GM12878 (cell line): ENCODE measurements at regions of chr6 and their contacts with region 1.

Region 1: DNA sequence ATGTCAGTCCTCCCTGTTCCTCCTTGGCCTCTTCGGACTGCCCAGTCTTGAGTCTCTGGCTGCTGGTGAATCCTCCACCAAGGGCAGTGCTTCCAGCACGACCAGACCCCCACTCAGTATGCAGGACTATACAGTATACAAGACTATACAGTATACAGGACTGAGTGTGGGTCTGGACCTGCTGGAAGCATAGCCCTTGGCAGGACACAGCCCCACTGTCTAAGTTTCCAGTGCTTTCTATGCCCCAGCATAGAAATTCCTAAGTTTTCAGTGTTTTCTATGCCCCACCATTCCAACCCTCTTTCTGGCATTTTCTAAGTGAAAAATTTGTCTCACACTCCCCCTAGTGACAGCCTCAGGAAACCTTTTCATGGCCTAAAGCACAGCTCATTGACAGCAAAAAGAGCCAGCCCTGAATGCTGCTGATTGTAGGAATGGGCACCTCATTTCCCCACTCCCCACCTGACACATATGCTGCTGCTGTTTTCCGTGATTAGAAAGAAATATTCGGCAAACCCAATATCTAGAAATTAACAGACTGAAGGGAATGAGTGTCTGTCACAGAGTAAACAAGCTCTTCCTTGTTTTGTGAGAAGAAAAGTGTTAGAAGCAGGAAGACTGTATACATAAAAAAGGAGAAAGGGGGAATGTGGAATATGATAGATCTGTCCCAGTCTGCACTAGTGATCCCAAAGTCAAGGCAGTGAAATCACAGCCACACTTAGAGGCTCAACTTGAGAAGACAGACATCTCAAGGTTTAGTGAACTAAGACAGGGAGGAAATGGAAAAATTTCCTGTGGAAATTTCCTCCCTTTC is 206.9 kb downstream of the IBTK start:
- DNase-seq: peak; percentile 7
- ATAC-seq: peak; percentile 87
- H3K4me3 ChIP-seq: no peak overlapping the region
- H3K27ac ChIP-seq: no peak overlapping the region
- H3K4me1 ChIP-seq: no peaks in the 10 kb centered on the region
- H3K27me3 ChIP-seq: no peaks in the 10 kb centered on the region
- CTCF ChIP-seq: peak; percentile 73 to 85 (median 80)
- EP300 ChIP-seq: no peak
- POLR2A ChIP-seq: no peak
- RAD21 ChIP-seq: peak; percentile 74

Region 2: DNA sequence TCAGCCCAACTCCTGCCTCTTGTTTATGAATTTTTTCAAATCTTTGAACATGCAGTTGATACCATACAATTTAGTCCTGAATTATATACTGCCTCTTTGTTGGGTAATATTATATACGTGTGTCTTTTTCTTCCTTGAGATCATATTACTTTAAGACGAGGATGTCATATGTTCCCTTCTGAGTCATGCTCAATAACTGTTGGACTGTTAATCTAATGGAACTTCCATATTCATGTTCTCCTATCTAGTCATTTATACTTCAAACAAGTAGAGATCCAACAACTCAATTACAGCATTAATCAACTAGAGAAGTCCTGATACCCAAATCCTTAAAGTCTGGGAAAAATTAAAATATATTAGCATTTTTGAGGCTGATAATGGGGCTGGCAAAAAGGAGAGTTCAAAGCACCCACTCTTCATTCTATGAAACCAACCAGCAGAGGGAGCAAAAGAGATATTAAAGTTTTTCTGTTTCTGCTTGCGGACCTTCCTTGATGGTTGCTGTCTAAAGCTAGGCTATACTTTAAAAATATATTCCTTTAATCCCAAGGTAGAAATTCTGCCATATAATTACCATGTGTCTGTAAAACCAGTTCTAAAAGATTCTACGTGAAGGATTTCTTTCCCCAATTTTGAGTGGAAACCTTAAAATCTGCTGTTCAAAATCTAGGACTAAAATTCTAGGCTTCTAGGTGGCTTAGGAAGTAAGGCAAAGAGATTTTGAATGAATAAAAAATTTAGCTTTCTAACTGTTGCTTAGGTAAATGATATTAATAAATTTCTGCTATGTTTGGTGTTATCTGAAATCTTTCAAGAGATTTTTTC is 1435.2 kb before region 1 on chr6:
- CTCF ChIA-PET with region 1: interaction called, 14 read pairs
- POLR2A ChIA-PET with region 1: no interaction called
- RAD21 ChIA-PET with region 1: interaction called, 3 read pairs
- SMC1A ChIA-PET with region 1: interaction called, 4 read pairs
- in situ Hi-C with region 1: no loop called
- intact Hi-C with region 1: no loop called
- DNase-seq: no peak
- ATAC-seq: peak; percentile 74
- H3K4me3 ChIP-seq: no peak overlapping the region
- H3K27ac ChIP-seq: no peak overlapping the region
- H3K4me1 ChIP-seq: no peaks in the 10 kb centered on the region
- H3K27me3 ChIP-seq: no peaks in the 10 kb centered on the region
- CTCF ChIP-seq: peak; percentile 30 to 52 (median 43); a peak in 4 of 6 replicates
- EP300 ChIP-seq: no peak
- POLR2A ChIP-seq: no peak
- RAD21 ChIP-seq: peak; percentile 51

Region 3: GRCh38 chr6:81241126-81242041 is 799.2 kb before region 1 on chr6:
- CTCF ChIA-PET with region 1: interaction called, 5 read pairs
- POLR2A ChIA-PET with region 1: no interaction called
- RAD21 ChIA-PET with region 1: interaction called, 10 read pairs
- SMC1A ChIA-PET with region 1: interaction called, 3 read pairs
- in situ Hi-C with region 1: no loop called
- intact Hi-C with region 1: no loop called
- DNase-seq: no peak
- ATAC-seq: no peak
- H3K4me3 ChIP-seq: no peak overlapping the region
- H3K27ac ChIP-seq: no peak overlapping the region
- H3K4me1 ChIP-seq: no peaks in the 10 kb centered on the region
- H3K27me3 ChIP-seq: no peaks in the 10 kb centered on the region
- CTCF ChIP-seq: peak in 2 of 3 experiments; percentile 5 to 30; a peak in 1 of 6 replicates
- EP300 ChIP-seq: no peak
- POLR2A ChIP-seq: no peak
- RAD21 ChIP-seq: peak; percentile 37

Region 4: DNA sequence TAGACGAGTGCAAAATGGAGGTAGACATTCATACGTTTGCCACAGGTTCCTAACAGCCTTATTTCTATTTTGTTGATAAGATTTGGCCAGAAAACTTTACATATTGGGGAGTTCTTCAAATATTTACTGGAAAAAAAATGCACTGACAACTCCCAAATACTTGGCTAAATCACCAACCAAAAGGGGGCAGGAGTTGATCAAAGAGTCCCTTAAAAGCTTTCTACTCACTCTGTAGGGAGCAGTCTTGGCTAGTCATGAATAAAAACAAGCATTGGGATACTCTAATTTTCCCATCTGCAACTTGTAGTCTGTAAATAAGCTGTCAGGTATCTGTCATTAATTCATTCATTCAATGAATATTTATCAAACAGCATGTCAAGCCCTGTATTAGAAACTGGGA is 306.5 kb before region 1 on chr6:
- CTCF ChIA-PET with region 1: interaction called, 18 read pairs
- POLR2A ChIA-PET with region 1: no interaction called
- RAD21 ChIA-PET with region 1: interaction called, 4 read pairs
- SMC1A ChIA-PET with region 1: interaction called, 10 read pairs
- in situ Hi-C with region 1: no loop called
- intact Hi-C with region 1: no loop called
- DNase-seq: no peak
- ATAC-seq: no peak
- H3K4me3 ChIP-seq: no peak overlapping the region
- H3K27ac ChIP-seq: no peak overlapping the region
- H3K4me1 ChIP-seq: no peaks in the 10 kb centered on the region
- H3K27me3 ChIP-seq: no peaks in the 10 kb centered on the region
- CTCF ChIP-seq: peak in 1 of 3 experiments; percentile 32; a peak in 1 of 6 replicates
- EP300 ChIP-seq: no peak
- POLR2A ChIP-seq: no peak
- RAD21 ChIP-seq: peak; percentile 36; the same call in 1 of the 2 replicates